B cell (primary cell): ENCODE measurements at regions of chr1 and their contacts with region 1.

Region 1: DNA sequence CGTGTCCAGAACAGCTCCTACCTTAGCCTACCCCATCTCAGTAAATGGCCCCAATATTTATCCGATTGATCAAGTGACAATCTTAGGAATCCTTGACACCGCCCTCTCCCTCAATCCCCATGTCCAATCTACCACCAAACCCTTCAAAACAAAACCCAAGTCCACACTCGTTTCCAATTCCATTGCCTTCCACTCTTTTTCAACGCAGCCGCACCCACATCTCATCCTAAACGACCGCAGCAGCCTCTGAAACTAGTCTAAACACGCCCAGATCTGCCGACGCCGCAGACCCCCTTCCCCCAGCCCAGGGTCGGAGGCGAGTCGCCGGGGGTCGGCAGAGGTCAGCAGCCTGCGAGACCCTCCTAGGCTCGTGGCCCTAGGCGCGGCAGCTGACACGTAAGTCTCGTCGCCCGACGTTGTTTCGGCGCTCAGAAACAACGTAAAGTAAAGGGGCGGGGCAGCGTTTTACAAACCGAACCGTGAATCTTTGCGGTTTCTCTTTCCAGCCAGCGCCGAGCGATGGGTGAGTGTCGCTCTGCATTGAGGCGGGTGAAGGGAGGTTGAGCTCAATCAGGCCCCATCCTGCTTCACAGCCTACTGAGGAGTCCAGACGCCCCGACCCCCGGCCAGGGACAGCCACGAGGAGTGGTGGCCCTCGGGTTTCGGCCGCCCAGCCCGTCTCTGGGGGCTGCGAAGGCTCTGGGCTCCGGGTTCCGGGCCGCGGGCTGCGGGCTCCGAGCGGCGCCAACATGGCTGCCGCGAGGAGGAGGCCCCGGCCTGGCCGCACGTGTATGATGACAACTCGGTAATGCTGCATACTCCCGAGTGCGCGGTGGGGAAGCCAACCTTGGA is at the start of gene RPS8:
- DNase-seq: peak; percentile 95
- ATAC-seq: peak; percentile 83
- H3K4me3 ChIP-seq: peak within 1 kb of the TSS; percentile 85 to 99 (median 89)
- H3K4me3 Mint-ChIP-seq: peak within 1 kb of the TSS; percentile 95
- H3K27ac ChIP-seq: peak within 1 kb of the TSS; percentile 89 to 93
- H3K27ac Mint-ChIP-seq: peak within 1 kb of the TSS; percentile 94
- H3K4me1 ChIP-seq: peaks cover 14 to 28% of the 10 kb centered on the region in 2 donors
- H3K4me1 Mint-ChIP-seq: peaks cover 34% of the 10 kb centered on the region
- H3K27me3 ChIP-seq: no peaks in the 10 kb centered on the region
- H3K27me3 Mint-ChIP-seq: no peaks in the 10 kb centered on the region
- CTCF ChIP-seq: no peak
- total RNA-seq, gene RPS8: 2,492 and 2,525 TPM in 2 replicates

Region 2: GRCh38 chr1:43799656-43800635 is 975.4 kb before region 1 on chr1:
- CTCF ChIA-PET with region 1: no interaction called
- POLR2A ChIA-PET with region 1: no interaction called
- intact Hi-C with region 1: no loop called
- DNase-seq: no peak
- ATAC-seq: no peak
- H3K4me3 ChIP-seq: no peak overlapping the region
- H3K4me3 Mint-ChIP-seq: no peak overlapping the region
- H3K27ac ChIP-seq: no peak overlapping the region
- H3K27ac Mint-ChIP-seq: no peak overlapping the region
- H3K4me1 ChIP-seq: no peaks in the 10 kb centered on the region
- H3K4me1 Mint-ChIP-seq: peaks cover 2% of the 10 kb centered on the region
- H3K27me3 ChIP-seq: no peaks in the 10 kb centered on the region
- H3K27me3 Mint-ChIP-seq: no peaks in the 10 kb centered on the region
- CTCF ChIP-seq: no peak

Region 3: GRCh38 chr1:44437107-44437716 is 338.1 kb before region 1 on chr1:
- CTCF ChIA-PET with region 1: no interaction called
- POLR2A ChIA-PET with region 1: no interaction called
- intact Hi-C with region 1: no loop called
- DNase-seq: no peak
- ATAC-seq: no peak
- H3K4me3 ChIP-seq: no peak overlapping the region
- H3K4me3 Mint-ChIP-seq: no peak overlapping the region
- H3K27ac ChIP-seq: no peak overlapping the region
- H3K27ac Mint-ChIP-seq: no peak overlapping the region
- H3K4me1 ChIP-seq: no peaks in the 10 kb centered on the region
- H3K4me1 Mint-ChIP-seq: no peaks in the 10 kb centered on the region
- H3K27me3 ChIP-seq: peaks cover 0 to 6% (median 2%) of the 10 kb centered on the region in 4 experiments
- H3K27me3 Mint-ChIP-seq: peaks cover 18% of the 10 kb centered on the region
- CTCF ChIP-seq: no peak

Region 4: GRCh38 chr1:44730741-44731512 is 44.4 kb before region 1 on chr1 and contains the start of gene RNU5D-1:
- CTCF ChIA-PET with region 1: interaction called, 39 read pairs
- POLR2A ChIA-PET with region 1: interaction called, 20 read pairs
- intact Hi-C with region 1: loop called (anchors 1 kb)
- DNase-seq: peak; percentile 97
- ATAC-seq: peak; percentile 74
- H3K4me3 ChIP-seq: peak within 1 kb of the TSS; percentile 17 to 68 (median 50)
- H3K4me3 Mint-ChIP-seq: peak within 1 kb of the TSS; percentile 92
- H3K27ac ChIP-seq: peak within 1 kb of the TSS; percentile 93 to 96
- H3K27ac Mint-ChIP-seq: peak within 1 kb of the TSS; percentile 100
- H3K4me1 ChIP-seq: peaks cover 12 to 24% of the 10 kb centered on the region in 2 donors
- H3K4me1 Mint-ChIP-seq: peaks cover 24% of the 10 kb centered on the region
- H3K27me3 ChIP-seq: no peaks in the 10 kb centered on the region
- H3K27me3 Mint-ChIP-seq: no peaks in the 10 kb centered on the region
- CTCF ChIP-seq: peak; percentile 87
- total RNA-seq, gene RNU5D-1: not detected in 2 replicates

Region 5: GRCh38 chr1:44757420-44757819 is 17.9 kb before region 1 on chr1:
- CTCF ChIA-PET with region 1: interaction called, 4 read pairs
- POLR2A ChIA-PET with region 1: interaction called, 16 read pairs
- intact Hi-C with region 1: no loop called
- DNase-seq: no peak
- ATAC-seq: peak; percentile 28
- H3K4me3 ChIP-seq: no peak overlapping the region
- H3K4me3 Mint-ChIP-seq: peak overlapping the region; percentile 15
- H3K27ac ChIP-seq: no peak overlapping the region
- H3K27ac Mint-ChIP-seq: peak overlapping the region; percentile 67
- H3K4me1 ChIP-seq: peaks cover 10 to 15% of the 10 kb centered on the region in 2 donors
- H3K4me1 Mint-ChIP-seq: peaks cover 18% of the 10 kb centered on the region
- H3K27me3 ChIP-seq: no peaks in the 10 kb centered on the region
- H3K27me3 Mint-ChIP-seq: no peaks in the 10 kb centered on the region
- CTCF ChIP-seq: no peak

Region 6: GRCh38 chr1:44812822-44813543 is 37.7 kb after region 1 on chr1:
- CTCF ChIA-PET with region 1: no interaction called
- POLR2A ChIA-PET with region 1: interaction called, 13 read pairs
- intact Hi-C with region 1: no loop called
- DNase-seq: no peak
- ATAC-seq: no peak
- H3K4me3 ChIP-seq: peak overlapping the region in 4 of 5 experiments; percentile 51 to 76 (median 68)
- H3K4me3 Mint-ChIP-seq: peak overlapping the region; percentile 92
- H3K27ac ChIP-seq: peak overlapping the region; percentile 70 to 86
- H3K27ac Mint-ChIP-seq: peak overlapping the region; percentile 37
- H3K4me1 ChIP-seq: peaks cover 38 to 53% of the 10 kb centered on the region in 2 donors
- H3K4me1 Mint-ChIP-seq: peaks cover 58% of the 10 kb centered on the region
- H3K27me3 ChIP-seq: no peaks in the 10 kb centered on the region
- H3K27me3 Mint-ChIP-seq: no peaks in the 10 kb centered on the region
- CTCF ChIP-seq: no peak